ENCODE measurements at regions of chr1 and their contacts with region 1.

Region 1: DNA sequence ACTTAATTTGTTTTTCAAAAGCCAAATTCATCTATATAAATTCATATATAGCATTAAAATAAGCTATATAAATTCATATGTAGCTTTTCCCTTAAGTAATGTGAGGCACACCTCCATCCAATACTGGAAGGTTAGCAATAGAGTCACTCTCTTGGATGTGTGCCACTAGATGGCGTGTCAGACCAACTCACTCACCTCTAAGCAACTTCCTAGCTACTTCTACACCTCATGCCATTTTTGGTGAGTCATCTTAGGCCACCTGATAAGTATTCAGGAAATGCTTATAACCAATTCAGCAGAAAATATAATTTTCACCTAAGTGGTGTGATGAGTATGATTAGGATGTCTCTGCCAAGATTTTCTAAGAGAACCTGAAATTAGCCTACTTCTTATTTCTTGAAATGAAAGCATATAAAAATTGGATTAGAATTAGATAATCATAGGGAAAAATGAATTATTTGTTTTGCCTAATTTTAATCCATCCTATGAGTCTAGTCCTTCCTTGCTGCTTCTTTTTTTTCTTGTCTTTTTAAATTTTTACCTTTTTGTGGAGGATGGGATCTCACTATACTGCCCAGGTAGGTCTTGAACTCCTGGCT is 34.4 kb upstream of the TADA1 start:
- DNase-seq: peak; percentile 81
- H3K4me3 ChIP-seq: no peak overlapping the region
- H3K27ac ChIP-seq: no peak overlapping the region
- H3K4me1 ChIP-seq: no peaks in the 10 kb centered on the region
- H3K27me3 ChIP-seq: peaks cover 2 to 10% of the 10 kb centered on the region in 2 experiments
- CTCF ChIP-seq: peak; percentile 58 to 66
- POLR2A ChIP-seq: no peak

Region 2: GRCh38 chr1:166489670-166490436 is 420.6 kb before region 1 on chr1:
- CTCF ChIA-PET with region 1: no interaction called
- POLR2A ChIA-PET with region 1: no interaction called
- dilution Hi-C with region 1: no loop called
- intact Hi-C with region 1: no loop called
- DNase-seq: no peak
- H3K4me3 ChIP-seq: no peak overlapping the region
- H3K27ac ChIP-seq: no peak overlapping the region
- H3K4me1 ChIP-seq: no peaks in the 10 kb centered on the region
- H3K27me3 ChIP-seq: no peaks in the 10 kb centered on the region
- CTCF ChIP-seq: no peak
- POLR2A ChIP-seq: no peak

Region 3: DNA sequence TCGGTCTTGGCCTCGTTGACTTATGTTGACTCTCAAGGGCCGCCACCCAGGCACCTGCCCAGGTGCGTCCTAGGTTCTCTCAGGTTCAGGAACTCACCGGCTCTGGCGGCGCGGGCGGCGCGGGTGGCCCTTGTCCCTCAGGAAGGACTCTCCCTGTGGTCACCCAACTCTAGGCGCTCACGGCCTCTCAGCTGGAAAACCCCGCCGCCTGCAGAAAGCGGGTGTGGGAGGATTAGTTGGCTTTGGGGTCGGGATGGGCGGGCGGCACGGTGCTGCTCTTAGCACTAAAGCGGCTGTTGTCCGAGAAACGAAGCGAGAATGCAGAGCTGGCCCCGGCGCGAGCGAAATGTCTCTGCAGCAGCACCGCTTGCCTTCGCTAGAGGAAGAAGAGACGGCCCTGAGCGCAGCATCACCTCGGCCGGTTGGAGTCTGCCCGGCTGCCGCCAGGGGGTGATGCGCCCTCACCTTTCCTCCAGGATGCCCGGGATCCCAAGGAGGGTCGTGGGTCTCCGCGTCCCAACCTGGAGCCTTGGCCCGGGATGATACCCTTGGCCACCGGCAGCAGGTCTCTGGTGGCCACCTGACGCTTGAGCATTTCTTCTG is 26.4 kb before region 1 on chr1:
- CTCF ChIA-PET with region 1: interaction called, 14 read pairs
- POLR2A ChIA-PET with region 1: no interaction called
- dilution Hi-C with region 1: no loop called
- intact Hi-C with region 1: loop called (anchors 1 kb)
- DNase-seq: peak; percentile 4
- H3K4me3 ChIP-seq: no peak overlapping the region
- H3K27ac ChIP-seq: no peak overlapping the region
- H3K4me1 ChIP-seq: no peaks in the 10 kb centered on the region
- H3K27me3 ChIP-seq: peaks cover 19 to 25% of the 10 kb centered on the region in 2 experiments
- CTCF ChIP-seq: peak; percentile 34 to 60
- POLR2A ChIP-seq: no peak

Region 4: DNA sequence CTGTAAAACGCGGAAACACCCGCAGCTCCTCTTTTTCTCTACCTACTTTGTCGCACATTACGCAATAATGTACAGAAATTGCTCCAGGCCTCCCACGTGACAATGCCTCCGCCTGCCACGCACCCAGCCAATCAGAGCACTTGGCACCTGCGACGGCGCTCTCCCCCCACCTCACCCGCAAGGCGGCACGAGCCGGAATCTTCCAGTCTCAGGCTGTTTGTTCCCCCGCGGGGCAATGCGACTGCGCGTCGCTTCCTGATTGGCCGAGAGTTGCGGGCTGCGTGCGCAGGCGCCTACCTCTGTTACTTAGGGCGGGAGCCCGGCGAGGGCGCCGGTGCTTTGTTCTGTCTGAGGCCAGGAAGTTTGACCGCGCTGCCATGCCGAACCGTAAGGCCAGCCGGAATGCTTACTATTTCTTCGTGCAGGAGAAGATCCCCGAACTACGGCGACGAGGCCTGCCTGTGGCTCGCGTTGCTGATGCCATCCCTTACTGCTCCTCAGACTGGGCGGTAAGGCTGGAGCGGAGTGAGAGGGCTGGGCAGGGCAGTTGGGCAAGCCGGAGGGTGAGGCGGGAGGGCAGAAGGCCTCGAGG is 78.6 kb after region 1 on chr1 and contains the start of gene MAEL:
- CTCF ChIA-PET with region 1: interaction called, 12 read pairs
- POLR2A ChIA-PET with region 1: no interaction called
- dilution Hi-C with region 1: no loop called
- intact Hi-C with region 1: no loop called
- DNase-seq: no peak
- H3K4me3 ChIP-seq: no peak within 1 kb of the TSS
- H3K27ac ChIP-seq: no peak within 1 kb of the TSS
- H3K4me1 ChIP-seq: no peaks in the 10 kb centered on the region
- H3K27me3 ChIP-seq: no peaks in the 10 kb centered on the region
- CTCF ChIP-seq: no peak
- POLR2A ChIP-seq: no peak
- total RNA-seq, gene MAEL: not detected in 2 replicates

Region 5: DNA sequence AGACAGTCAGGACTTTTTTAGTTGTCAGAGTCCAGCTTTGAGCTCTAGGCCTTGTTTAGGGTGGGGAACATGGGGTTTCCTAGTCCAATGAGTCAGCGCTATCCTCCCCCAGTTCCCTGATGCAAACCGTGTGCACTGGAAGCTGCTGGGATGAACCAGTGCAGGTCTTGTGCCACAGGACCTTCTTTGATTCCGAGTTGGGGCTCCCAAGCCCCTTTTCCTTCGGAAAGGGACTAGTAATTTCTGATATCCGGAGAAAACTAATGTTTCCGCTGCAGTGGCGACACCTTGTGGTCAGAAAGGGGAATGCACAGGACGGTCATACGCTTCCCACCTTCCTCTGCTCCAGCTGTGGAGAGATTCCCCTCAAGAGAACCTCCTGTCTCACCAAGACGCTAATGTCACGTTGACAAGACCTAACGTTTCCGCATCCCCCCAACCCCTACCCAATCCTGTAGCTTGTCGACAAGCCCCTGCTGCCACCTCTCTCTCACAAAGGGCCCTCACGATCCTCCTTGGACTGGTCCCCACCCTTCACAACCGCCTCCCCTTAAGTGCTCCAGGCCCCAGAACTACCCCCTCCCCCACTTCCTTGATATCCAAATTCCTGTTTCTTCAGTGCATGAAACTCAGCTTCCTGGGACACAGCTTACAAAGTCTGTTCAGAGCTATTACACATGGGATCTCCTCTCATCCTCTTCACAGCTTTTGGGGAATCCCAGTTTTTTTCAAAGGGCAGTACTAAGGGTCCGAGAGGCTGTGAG is 148.7 kb after region 1 on chr1:
- CTCF ChIA-PET with region 1: interaction called, 509 read pairs
- POLR2A ChIA-PET with region 1: no interaction called
- dilution Hi-C with region 1: no loop called
- intact Hi-C with region 1: loop called (anchors 1 kb)
- DNase-seq: peak; percentile 54
- H3K4me3 ChIP-seq: no peak overlapping the region
- H3K27ac ChIP-seq: no peak overlapping the region
- H3K4me1 ChIP-seq: peaks cover 3% of the 10 kb centered on the region
- H3K27me3 ChIP-seq: peaks cover 0 to 1% of the 10 kb centered on the region in 2 experiments
- CTCF ChIP-seq: peak; percentile 93 to 96
- POLR2A ChIP-seq: no peak

Region 6: GRCh38 chr1:167342846-167343245 is 432.4 kb after region 1 on chr1:
- CTCF ChIA-PET with region 1: no interaction called
- POLR2A ChIA-PET with region 1: no interaction called
- dilution Hi-C with region 1: no loop called
- intact Hi-C with region 1: no loop called
- DNase-seq: no peak
- H3K4me3 ChIP-seq: no peak overlapping the region
- H3K27ac ChIP-seq: no peak overlapping the region
- H3K4me1 ChIP-seq: peaks cover 6% of the 10 kb centered on the region
- H3K27me3 ChIP-seq: no peaks in the 10 kb centered on the region
- CTCF ChIP-seq: no peak
- POLR2A ChIP-seq: no peak

Region 7: GRCh38 chr1:167533851-167534300 is 623.4 kb after region 1 on chr1:
- CTCF ChIA-PET with region 1: interaction called, 23 read pairs
- POLR2A ChIA-PET with region 1: no interaction called
- dilution Hi-C with region 1: no loop called
- intact Hi-C with region 1: loop called (anchors 2 kb)
- DNase-seq: peak; percentile 47
- H3K4me3 ChIP-seq: no peak overlapping the region
- H3K27ac ChIP-seq: no peak overlapping the region
- H3K4me1 ChIP-seq: no peaks in the 10 kb centered on the region
- H3K27me3 ChIP-seq: peaks cover 0 to 2% of the 10 kb centered on the region in 2 experiments
- CTCF ChIP-seq: peak; percentile 84 to 87
- POLR2A ChIP-seq: no peak

Measured in endothelial cell of umbilical vein (primary cell).